Lower lobe of right lung (tissue), 2 donors: ENCODE measurements at regions of chr1 and their contacts with region 1.

Region 1: GRCh38 chr1:158124999-158125398 is 55.7 kb upstream of the CD1D start:
- DNase-seq: peak; percentile 81
- ATAC-seq: peak; percentile 95 to 96
- H3K4me3 ChIP-seq: no peak overlapping the region
- H3K27ac ChIP-seq: no peak overlapping the region
- H3K4me1 ChIP-seq: no peaks in the 10 kb centered on the region
- H3K27me3 ChIP-seq: peaks cover 18% of the 10 kb centered on the region
- CTCF ChIP-seq: peak; percentile 92

Region 2: DNA sequence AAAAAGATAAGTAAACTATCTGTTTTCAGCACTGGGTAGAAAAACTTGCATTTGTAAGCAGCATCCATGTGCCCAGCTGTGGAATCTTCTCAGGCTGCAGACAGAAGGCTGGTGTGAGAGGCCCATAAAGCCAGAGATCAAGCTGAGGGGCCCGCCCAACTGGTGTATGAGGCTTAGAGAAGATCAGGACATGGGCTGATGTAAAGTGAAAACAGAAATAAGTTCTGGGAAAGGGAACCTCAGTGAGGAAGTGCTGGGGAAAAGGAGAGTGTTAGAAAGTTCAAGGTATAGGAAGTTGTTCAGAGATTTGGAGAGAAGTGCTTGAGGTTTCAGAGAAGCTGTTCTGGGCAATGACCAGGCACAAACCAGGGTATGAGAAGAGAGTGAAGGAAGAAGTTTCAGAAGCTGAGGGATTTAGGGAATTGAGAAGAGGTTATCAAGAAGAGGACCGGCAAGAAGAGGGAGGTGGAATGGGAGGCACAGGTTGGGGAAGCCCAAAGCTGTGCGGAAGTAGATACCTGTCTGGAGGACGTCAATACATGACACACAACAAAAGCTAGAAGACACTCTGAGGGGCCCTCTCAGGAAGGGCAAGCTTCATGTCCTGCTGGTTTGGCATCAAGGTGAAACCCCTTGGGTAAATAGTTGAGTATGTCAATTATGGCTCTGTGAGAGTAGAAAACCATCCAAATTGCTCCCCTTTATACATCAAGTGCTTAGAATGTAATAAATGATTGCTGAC is 280.7 kb before region 1 on chr1:
- intact Hi-C with region 1: no loop called
- DNase-seq: peak; percentile 65
- ATAC-seq: peak; percentile 77 to 82
- H3K4me3 ChIP-seq: no peak overlapping the region
- H3K27ac ChIP-seq: no peak overlapping the region
- H3K4me1 ChIP-seq: no peaks in the 10 kb centered on the region
- H3K27me3 ChIP-seq: no peaks in the 10 kb centered on the region
- CTCF ChIP-seq: no peak

Region 3: GRCh38 chr1:157963713-157964112 is 161.3 kb before region 1 on chr1:
- intact Hi-C with region 1: loop called (anchors 10 kb)
- DNase-seq: peak; percentile 62
- ATAC-seq: peak; percentile 77 to 85
- H3K4me3 ChIP-seq: no peak overlapping the region
- H3K27ac ChIP-seq: no peak overlapping the region
- H3K4me1 ChIP-seq: no peaks in the 10 kb centered on the region
- H3K27me3 ChIP-seq: peaks cover 6% of the 10 kb centered on the region
- CTCF ChIP-seq: peak; percentile 94

Region 4: GRCh38 chr1:158203693-158204457 is 78.9 kb after region 1 on chr1:
- intact Hi-C with region 1: no loop called
- DNase-seq: no peak
- ATAC-seq: peak; percentile 65 to 78
- H3K4me3 ChIP-seq: no peak overlapping the region
- H3K27ac ChIP-seq: no peak overlapping the region
- H3K4me1 ChIP-seq: peaks cover 4% of the 10 kb centered on the region
- H3K27me3 ChIP-seq: no peaks in the 10 kb centered on the region
- CTCF ChIP-seq: peak; percentile 83